ENCODE measurements at regions of chr1 and their contacts with region 1.

Region 1: GRCh38 chr1:28886731-28887418 is 27.5 kb upstream of the EPB41 start:
- DNase-seq: peak; percentile 80
- ATAC-seq: peak; percentile 84
- H3K4me3 ChIP-seq: peak overlapping the region; percentile 97 to 100 (median 98)
- H3K27ac ChIP-seq: peak overlapping the region; percentile 66
- H3K4me1 ChIP-seq: peaks cover 48% of the 10 kb centered on the region
- H3K27me3 ChIP-seq: no peaks in the 10 kb centered on the region; a peak in 1 of 5 replicates
- CTCF ChIP-seq: no peak
- EP300 ChIP-seq: no peak
- POLR2A ChIP-seq: peak; percentile 39 to 49; a peak in 2 of 4 replicates
- RAD21 ChIP-seq: no peak

Region 2: GRCh38 chr1:28560886-28561285 is 326.0 kb before region 1 on chr1:
- CTCF ChIA-PET with region 1: no interaction called
- POLR2A ChIA-PET with region 1: no interaction called
- in situ Hi-C with region 1: no loop called
- intact Hi-C with region 1: no loop called
- DNase-seq: no peak
- ATAC-seq: no peak
- H3K4me3 ChIP-seq: no peak overlapping the region
- H3K27ac ChIP-seq: no peak overlapping the region
- H3K4me1 ChIP-seq: no peaks in the 10 kb centered on the region
- H3K27me3 ChIP-seq: no peaks in the 10 kb centered on the region
- CTCF ChIP-seq: no peak
- EP300 ChIP-seq: no peak
- POLR2A ChIP-seq: no peak
- RAD21 ChIP-seq: no peak

Region 3: GRCh38 chr1:28914228-28915030 is 27.6 kb after region 1 on chr1 and contains the start of gene EPB41:
- CTCF ChIA-PET with region 1: no interaction called
- POLR2A ChIA-PET with region 1: interaction called, 13 read pairs
- in situ Hi-C with region 1: no loop called
- intact Hi-C with region 1: no loop called
- DNase-seq: peak; percentile 94
- ATAC-seq: peak; percentile 95
- H3K4me3 ChIP-seq: peak within 1 kb of the TSS; percentile 46 to 81 (median 73)
- H3K27ac ChIP-seq: peak within 1 kb of the TSS; percentile 66
- H3K4me1 ChIP-seq: peaks cover 43% of the 10 kb centered on the region
- H3K27me3 ChIP-seq: no peaks in the 10 kb centered on the region; a peak in 1 of 5 replicates
- CTCF ChIP-seq: 0 out of 2 replicates have a peak, but pooled peaks have one; percentile 3
- EP300 ChIP-seq: no peak
- POLR2A ChIP-seq: peak in 1 of 2 experiments; percentile 69; a peak in 2 of 4 replicates
- RAD21 ChIP-seq: peak; percentile 35
- total RNA-seq, gene EPB41: 34.5 and 51.4 TPM in 2 replicates

Region 4: DNA sequence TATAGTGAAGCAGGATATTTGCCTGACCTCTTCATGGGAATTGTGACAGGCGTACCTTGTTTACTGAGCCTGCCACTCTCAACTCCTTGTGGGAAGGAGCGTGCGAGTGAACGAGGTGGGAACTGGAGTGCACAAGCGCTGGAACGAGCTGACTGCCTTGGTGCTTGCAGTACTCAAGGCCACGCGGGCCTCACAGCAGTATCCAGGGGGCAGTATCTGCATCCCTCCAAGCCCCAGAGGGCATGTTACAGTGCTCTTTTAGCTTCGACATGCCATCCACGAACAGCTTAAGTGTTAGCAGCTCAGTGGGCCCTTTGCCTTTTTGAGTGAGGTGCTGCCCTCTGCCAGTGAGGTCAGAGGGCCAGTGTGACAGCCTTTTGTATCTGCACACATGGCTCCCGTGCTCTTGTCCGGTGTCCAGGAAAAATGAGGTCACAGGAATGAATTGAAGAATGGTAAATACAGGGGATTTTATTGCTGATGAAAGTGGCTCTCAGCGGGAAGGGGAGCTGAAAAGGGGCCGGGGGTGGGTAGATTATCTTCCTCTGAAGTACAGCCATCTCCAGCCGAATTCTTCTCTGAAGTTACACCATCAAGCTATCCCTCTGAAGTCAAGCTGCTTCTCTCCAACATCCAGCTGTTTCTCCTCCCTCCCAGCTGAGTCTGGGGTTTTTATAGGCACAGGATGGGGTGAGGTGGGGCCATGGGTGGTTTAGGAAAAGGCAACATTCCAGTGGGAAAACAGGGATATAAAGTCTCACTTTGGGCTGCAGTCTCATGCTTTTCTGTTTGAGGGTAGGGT is 96.8 kb after region 1 on chr1:
- CTCF ChIA-PET with region 1: interaction called, 12 read pairs
- POLR2A ChIA-PET with region 1: interaction called, 7 read pairs
- in situ Hi-C with region 1: loop called (anchors 10 kb)
- intact Hi-C with region 1: loop called (anchors 1 kb)
- DNase-seq: peak; percentile 79
- ATAC-seq: peak; percentile 97
- H3K4me3 ChIP-seq: peak overlapping the region; percentile 1 to 33 (median 29); a peak in 4 of 6 replicates
- H3K27ac ChIP-seq: peak overlapping the region; percentile 22
- H3K4me1 ChIP-seq: peaks cover 27% of the 10 kb centered on the region
- H3K27me3 ChIP-seq: no peaks in the 10 kb centered on the region
- CTCF ChIP-seq: peak; percentile 81
- EP300 ChIP-seq: 0 out of 4 replicates have a peak, but pooled peaks of 1 of the 2 experiments have one; percentile 14
- POLR2A ChIP-seq: no peak
- RAD21 ChIP-seq: peak; percentile 31; the same call in 1 of the 2 replicates

Region 5: DNA sequence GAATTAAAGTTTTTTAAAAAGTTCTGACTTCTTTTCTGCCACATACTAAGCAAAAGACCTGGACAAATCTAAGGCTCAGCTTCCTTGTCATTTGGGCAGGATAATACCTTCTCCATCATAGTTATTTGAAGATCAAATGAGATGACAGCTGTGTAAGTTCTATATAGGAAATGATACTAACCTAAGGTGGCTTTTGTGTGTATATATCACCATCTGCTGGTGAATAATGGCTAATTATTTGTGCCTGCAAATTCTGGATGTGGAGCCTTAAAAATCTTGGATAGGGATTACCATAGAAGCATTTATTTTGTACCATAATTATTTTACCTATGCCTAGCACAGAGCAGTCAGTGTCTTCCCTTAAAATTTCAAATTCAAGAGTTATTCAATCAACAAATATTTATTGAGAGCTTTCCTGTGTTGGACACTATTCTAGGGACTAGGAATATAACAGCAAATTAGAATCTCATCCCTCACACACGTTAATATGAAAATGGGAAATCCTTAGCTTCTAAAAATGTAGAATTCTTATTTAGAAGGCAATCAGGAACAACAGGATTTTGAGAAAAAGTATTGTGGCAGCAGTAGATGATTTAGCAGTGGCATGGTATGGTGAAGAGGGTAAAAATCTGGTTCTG is 147.1 kb after region 1 on chr1:
- CTCF ChIA-PET with region 1: interaction called, 41 read pairs
- POLR2A ChIA-PET with region 1: interaction called, 3 read pairs
- in situ Hi-C with region 1: loop called (anchors 5 kb)
- intact Hi-C with region 1: loop called (anchors 1 kb)
- DNase-seq: peak; percentile 50
- ATAC-seq: no peak
- H3K4me3 ChIP-seq: no peak overlapping the region
- H3K27ac ChIP-seq: no peak overlapping the region
- H3K4me1 ChIP-seq: no peaks in the 10 kb centered on the region
- H3K27me3 ChIP-seq: no peaks in the 10 kb centered on the region
- CTCF ChIP-seq: peak; percentile 67
- EP300 ChIP-seq: no peak
- POLR2A ChIP-seq: no peak
- RAD21 ChIP-seq: peak; percentile 68

Region 6: GRCh38 chr1:29124366-29125236 is 237.7 kb after region 1 on chr1:
- CTCF ChIA-PET with region 1: no interaction called
- POLR2A ChIA-PET with region 1: no interaction called
- in situ Hi-C with region 1: loop called (anchors 10 kb)
- intact Hi-C with region 1: loop called (anchors 10 kb)
- DNase-seq: peak; percentile 56
- ATAC-seq: peak; percentile 74
- H3K4me3 ChIP-seq: peak overlapping the region; percentile 76 to 89 (median 85)
- H3K27ac ChIP-seq: peak overlapping the region; percentile 13
- H3K4me1 ChIP-seq: peaks cover 22% of the 10 kb centered on the region
- H3K27me3 ChIP-seq: peaks cover 2 to 11% of the 10 kb centered on the region in 2 experiments; a peak in 2 of 5 replicates
- CTCF ChIP-seq: peak; percentile 66
- EP300 ChIP-seq: 0 out of 4 replicates have a peak, but pooled peaks of 1 of the 2 experiments have one; percentile 14
- POLR2A ChIP-seq: peak; percentile 21 to 27; a peak in 2 of 4 replicates
- RAD21 ChIP-seq: no peak

Region 7: GRCh38 chr1:29197585-29197924 is 310.7 kb after region 1 on chr1:
- CTCF ChIA-PET with region 1: interaction called, 12 read pairs
- POLR2A ChIA-PET with region 1: interaction called, 5 read pairs
- in situ Hi-C with region 1: loop called (anchors 5 kb)
- intact Hi-C with region 1: no loop called
- DNase-seq: peak; percentile 60
- ATAC-seq: peak; percentile 92
- H3K4me3 ChIP-seq: no peak overlapping the region
- H3K27ac ChIP-seq: no peak overlapping the region
- H3K4me1 ChIP-seq: peaks cover 12% of the 10 kb centered on the region
- H3K27me3 ChIP-seq: no peaks in the 10 kb centered on the region
- CTCF ChIP-seq: peak; percentile 77
- EP300 ChIP-seq: no peak
- POLR2A ChIP-seq: no peak
- RAD21 ChIP-seq: peak; percentile 66; the same call in 1 of the 2 replicates

Region 8: GRCh38 chr1:29202584-29203340 is 315.9 kb after region 1 on chr1:
- CTCF ChIA-PET with region 1: interaction called, 12 read pairs
- POLR2A ChIA-PET with region 1: interaction called, 5 read pairs
- in situ Hi-C with region 1: loop called (anchors 5 kb)
- intact Hi-C with region 1: loop called (anchors 1 kb)
- DNase-seq: peak; percentile 89
- ATAC-seq: peak; percentile 97
- H3K4me3 ChIP-seq: no peak overlapping the region
- H3K27ac ChIP-seq: no peak overlapping the region
- H3K4me1 ChIP-seq: peaks cover 6% of the 10 kb centered on the region
- H3K27me3 ChIP-seq: no peaks in the 10 kb centered on the region
- CTCF ChIP-seq: peak; percentile 99
- EP300 ChIP-seq: no peak
- POLR2A ChIP-seq: no peak
- RAD21 ChIP-seq: peak; percentile 95